CD8-positive, alpha-beta T cell (primary cell): ENCODE measurements at regions of chr5 and their contacts with region 1.

Region 1: DNA sequence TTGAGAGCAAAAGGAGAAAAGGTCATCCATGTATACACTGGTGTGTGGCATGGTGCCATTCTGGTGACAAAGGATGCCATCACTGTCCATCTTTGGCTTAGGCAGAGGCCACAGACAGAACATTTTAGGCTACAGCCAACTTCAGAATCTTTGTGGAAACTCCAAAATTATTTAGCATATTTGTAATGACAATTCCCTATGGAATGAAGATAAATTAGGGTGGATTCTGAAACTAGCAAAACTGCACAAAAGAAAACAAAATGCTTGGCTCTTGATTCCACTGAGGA is 92.5 kb downstream of the FBXW11 start:
- DNase-seq: no peak
- ATAC-seq: no peak
- H3K4me3 ChIP-seq: no peak overlapping the region
- H3K4me3 Mint-ChIP-seq: no peak overlapping the region
- H3K27ac ChIP-seq: no peak overlapping the region
- H3K27ac Mint-ChIP-seq: peak overlapping the region; percentile 7
- H3K4me1 ChIP-seq: peaks cover 9% of the 10 kb centered on the region
- H3K4me1 Mint-ChIP-seq: peaks cover 45% of the 10 kb centered on the region
- H3K27me3 ChIP-seq: no peaks in the 10 kb centered on the region
- H3K27me3 Mint-ChIP-seq: no peaks in the 10 kb centered on the region
- CTCF ChIP-seq: no peak

Region 2: GRCh38 chr5:169934990-169935389 is 1978.9 kb before region 1 on chr5:
- CTCF ChIA-PET with region 1: no interaction called
- POLR2A ChIA-PET with region 1: no interaction called
- intact Hi-C with region 1: no loop called
- DNase-seq: no peak
- ATAC-seq: no peak
- H3K4me3 ChIP-seq: no peak overlapping the region
- H3K4me3 Mint-ChIP-seq: no peak overlapping the region
- H3K27ac ChIP-seq: no peak overlapping the region
- H3K27ac Mint-ChIP-seq: peak overlapping the region; percentile 62
- H3K4me1 ChIP-seq: peaks cover 3% of the 10 kb centered on the region
- H3K4me1 Mint-ChIP-seq: peaks cover 51% of the 10 kb centered on the region
- H3K27me3 ChIP-seq: no peaks in the 10 kb centered on the region
- H3K27me3 Mint-ChIP-seq: no peaks in the 10 kb centered on the region
- CTCF ChIP-seq: no peak

Region 3: GRCh38 chr5:171898386-171898785 is 15.5 kb before region 1 on chr5:
- CTCF ChIA-PET with region 1: interaction called, 17 read pairs
- POLR2A ChIA-PET with region 1: no interaction called
- intact Hi-C with region 1: no loop called
- DNase-seq: no peak
- ATAC-seq: no peak
- H3K4me3 ChIP-seq: no peak overlapping the region
- H3K4me3 Mint-ChIP-seq: no peak overlapping the region
- H3K27ac ChIP-seq: no peak overlapping the region
- H3K27ac Mint-ChIP-seq: no peak overlapping the region
- H3K4me1 ChIP-seq: peaks cover 11% of the 10 kb centered on the region
- H3K4me1 Mint-ChIP-seq: peaks cover 36% of the 10 kb centered on the region
- H3K27me3 ChIP-seq: no peaks in the 10 kb centered on the region
- H3K27me3 Mint-ChIP-seq: no peaks in the 10 kb centered on the region
- CTCF ChIP-seq: no peak

Region 4: DNA sequence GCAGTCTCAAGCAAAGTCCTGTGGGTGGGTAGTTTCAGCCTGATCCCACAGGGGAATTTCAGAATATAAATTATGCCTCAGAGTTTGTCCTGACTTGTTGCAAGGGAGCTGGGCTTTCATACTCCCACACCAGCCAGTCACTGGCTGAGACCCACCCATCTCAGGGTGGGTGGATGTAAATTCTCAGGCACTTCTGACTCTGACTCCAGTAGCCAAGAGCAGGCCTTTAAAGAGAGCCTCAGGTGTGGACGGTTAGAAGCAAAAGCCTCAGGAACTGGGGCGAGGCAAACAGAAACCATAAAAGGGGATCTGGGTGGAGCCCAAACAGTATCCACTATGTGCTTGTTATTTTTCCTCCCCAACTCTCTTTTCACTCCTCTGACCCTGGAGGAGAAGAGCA is 121.1 kb after region 1 on chr5:
- CTCF ChIA-PET with region 1: interaction called, 54 read pairs
- POLR2A ChIA-PET with region 1: no interaction called
- intact Hi-C with region 1: loop called (anchors 1 kb)
- DNase-seq: no peak
- ATAC-seq: no peak
- H3K4me3 ChIP-seq: no peak overlapping the region
- H3K4me3 Mint-ChIP-seq: no peak overlapping the region
- H3K27ac ChIP-seq: no peak overlapping the region
- H3K27ac Mint-ChIP-seq: no peak overlapping the region
- H3K4me1 ChIP-seq: no peaks in the 10 kb centered on the region
- H3K4me1 Mint-ChIP-seq: peaks cover 11% of the 10 kb centered on the region
- H3K27me3 ChIP-seq: no peaks in the 10 kb centered on the region
- H3K27me3 Mint-ChIP-seq: no peaks in the 10 kb centered on the region
- CTCF ChIP-seq: no peak

Region 5: DNA sequence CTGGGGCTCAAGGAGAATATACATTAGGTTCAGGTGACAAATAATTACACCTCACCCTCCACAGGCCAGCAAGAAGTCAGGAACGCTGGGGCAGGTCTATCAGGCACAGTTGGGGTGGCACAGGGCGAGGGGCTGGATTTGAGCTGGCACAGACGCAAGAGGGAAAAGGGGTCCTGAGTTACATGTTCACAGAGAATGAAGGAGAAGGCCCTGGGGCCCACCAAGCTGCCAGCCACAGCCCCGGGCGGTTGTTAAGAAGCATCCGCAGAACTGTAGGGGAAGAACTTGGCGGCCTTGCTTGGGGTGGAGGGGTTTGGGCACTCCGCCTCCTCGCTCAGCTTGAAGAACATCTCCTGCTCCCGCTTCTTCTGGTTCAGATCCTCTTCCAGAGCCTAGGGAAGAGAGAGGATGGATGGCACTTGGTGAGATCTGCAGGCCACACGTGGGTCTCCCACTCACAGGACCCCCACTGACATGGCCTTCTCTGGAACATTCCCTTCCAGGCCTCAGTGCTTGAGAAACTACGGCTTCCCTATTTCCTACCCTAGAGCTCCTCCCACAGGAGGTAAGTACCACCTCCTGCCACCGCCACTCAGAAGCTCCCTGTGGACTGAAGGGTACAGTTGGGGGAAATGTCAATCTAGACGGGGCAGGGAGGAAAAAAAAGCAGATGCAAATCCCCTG is 130.8 kb after region 1 on chr5:
- CTCF ChIA-PET with region 1: interaction called, 54 read pairs
- POLR2A ChIA-PET with region 1: interaction called, 3 read pairs
- intact Hi-C with region 1: loop called (anchors 1 kb)
- DNase-seq: no peak
- ATAC-seq: no peak
- H3K4me3 ChIP-seq: no peak overlapping the region
- H3K4me3 Mint-ChIP-seq: no peak overlapping the region
- H3K27ac ChIP-seq: no peak overlapping the region
- H3K27ac Mint-ChIP-seq: peak overlapping the region; percentile 78
- H3K4me1 ChIP-seq: no peaks in the 10 kb centered on the region
- H3K4me1 Mint-ChIP-seq: peaks cover 11% of the 10 kb centered on the region
- H3K27me3 ChIP-seq: no peaks in the 10 kb centered on the region
- H3K27me3 Mint-ChIP-seq: no peaks in the 10 kb centered on the region
- CTCF ChIP-seq: no peak

Region 6: DNA sequence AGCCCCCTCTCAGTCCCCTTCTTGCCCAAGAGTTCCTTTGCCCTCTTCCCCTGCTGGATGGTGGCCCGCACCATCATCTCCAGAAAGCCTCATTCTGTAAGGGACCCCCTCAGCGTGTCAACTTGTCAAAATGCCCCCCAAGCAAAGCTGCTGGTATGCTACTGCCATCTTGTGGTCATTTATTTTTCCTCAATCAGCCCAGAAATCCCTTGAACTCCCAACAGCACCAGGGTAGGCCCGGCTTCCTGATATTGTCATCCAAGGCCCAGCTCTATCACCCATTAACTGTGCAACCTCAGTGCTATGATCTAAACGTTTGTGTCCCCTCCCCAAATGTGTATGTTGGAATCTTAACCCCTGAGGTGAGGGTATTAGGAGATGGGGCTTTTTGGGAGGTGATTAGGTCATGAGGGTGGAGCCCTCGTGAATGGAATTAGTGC is 145.8 kb after region 1 on chr5:
- CTCF ChIA-PET with region 1: interaction called, 26 read pairs
- POLR2A ChIA-PET with region 1: interaction called, 3 read pairs
- intact Hi-C with region 1: loop called (anchors 2 to 5 kb)
- DNase-seq: peak in 2 of 9 experiments; percentile 39 to 54
- ATAC-seq: no peak
- H3K4me3 ChIP-seq: no peak overlapping the region
- H3K4me3 Mint-ChIP-seq: no peak overlapping the region
- H3K27ac ChIP-seq: no peak overlapping the region
- H3K27ac Mint-ChIP-seq: peak overlapping the region; percentile 61
- H3K4me1 ChIP-seq: peaks cover 9% of the 10 kb centered on the region
- H3K4me1 Mint-ChIP-seq: peaks cover 30% of the 10 kb centered on the region
- H3K27me3 ChIP-seq: no peaks in the 10 kb centered on the region
- H3K27me3 Mint-ChIP-seq: no peaks in the 10 kb centered on the region
- CTCF ChIP-seq: peak; percentile 43

Region 7: DNA sequence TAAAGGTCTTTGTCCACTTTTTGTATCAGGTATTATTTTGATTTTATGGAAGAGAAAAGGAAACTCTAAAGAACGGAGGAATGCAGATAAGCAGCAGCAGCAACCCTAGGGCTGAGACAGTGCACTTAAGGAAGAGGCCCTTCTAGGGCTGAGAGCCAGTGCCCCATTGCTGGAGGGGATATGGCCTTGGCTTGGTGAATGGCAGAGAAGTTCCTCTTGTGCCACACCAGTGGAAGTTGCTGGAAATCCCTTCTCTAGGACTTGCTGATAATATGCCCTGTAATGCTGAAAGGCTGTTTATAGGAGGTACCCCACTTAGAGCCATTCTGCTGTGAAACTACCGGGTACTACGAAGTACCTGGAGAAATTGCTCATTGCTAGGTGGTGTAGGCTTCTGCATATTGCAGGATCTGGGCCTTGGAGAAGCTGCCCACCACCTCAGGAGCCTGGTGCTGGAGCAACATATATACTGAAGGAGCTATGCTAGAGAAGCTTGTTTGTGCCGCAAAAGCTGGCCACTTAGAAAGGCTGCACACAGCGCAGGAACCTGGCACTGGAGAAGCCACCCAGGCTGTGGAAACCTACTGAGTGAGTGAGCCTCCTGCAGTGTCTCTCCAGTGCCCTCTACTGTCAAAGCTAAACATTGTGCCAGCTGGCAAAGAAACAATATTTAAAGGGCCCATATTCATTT is 379.3 kb after region 1 on chr5:
- CTCF ChIA-PET with region 1: interaction called, 28 read pairs
- POLR2A ChIA-PET with region 1: no interaction called
- intact Hi-C with region 1: loop called (anchors 1 to 2 kb)
- DNase-seq: peak; percentile 16 to 78 (median 53)
- ATAC-seq: peak; percentile 100
- H3K4me3 ChIP-seq: no peak overlapping the region
- H3K4me3 Mint-ChIP-seq: no peak overlapping the region
- H3K27ac ChIP-seq: no peak overlapping the region
- H3K27ac Mint-ChIP-seq: no peak overlapping the region
- H3K4me1 ChIP-seq: no peaks in the 10 kb centered on the region
- H3K4me1 Mint-ChIP-seq: peaks cover 2% of the 10 kb centered on the region
- H3K27me3 ChIP-seq: no peaks in the 10 kb centered on the region
- H3K27me3 Mint-ChIP-seq: peaks cover 3% of the 10 kb centered on the region
- CTCF ChIP-seq: peak; percentile 82

Region 8: DNA sequence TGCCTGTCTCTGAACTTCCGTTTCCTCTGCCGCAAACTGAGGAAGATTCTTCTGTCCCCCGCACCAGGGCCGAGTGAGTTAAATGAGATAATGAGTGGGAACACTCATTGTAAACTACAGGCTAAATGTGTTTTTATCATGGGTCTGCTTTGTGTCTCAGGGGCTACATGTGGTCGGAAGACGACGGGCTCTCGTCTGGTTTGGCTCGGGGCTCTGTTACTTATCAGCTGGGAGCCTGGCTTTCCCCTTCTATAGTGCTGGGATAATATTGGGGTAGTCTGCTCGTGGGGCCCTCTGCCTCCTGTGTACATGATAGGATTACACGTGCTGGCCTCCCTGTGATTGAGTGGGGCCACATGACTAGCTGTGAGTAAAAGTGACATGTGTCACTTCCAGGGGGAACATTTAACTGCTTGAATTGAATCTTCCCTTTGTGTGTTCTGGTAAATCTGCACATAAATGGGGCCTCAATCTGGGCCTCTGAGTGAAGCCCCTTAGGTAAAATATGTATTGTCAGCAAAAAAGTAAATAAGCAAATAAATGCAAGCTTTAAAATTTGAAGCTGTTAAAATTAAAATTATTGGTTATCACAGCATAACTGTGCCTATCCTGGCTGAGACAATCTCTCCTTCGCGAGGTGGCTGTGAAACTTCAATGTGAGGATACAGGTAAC is 627.3 kb after region 1 on chr5:
- CTCF ChIA-PET with region 1: no interaction called
- POLR2A ChIA-PET with region 1: no interaction called
- intact Hi-C with region 1: no loop called
- DNase-seq: peak in 1 of 9 experiments; percentile 5
- ATAC-seq: no peak
- H3K4me3 ChIP-seq: no peak overlapping the region
- H3K4me3 Mint-ChIP-seq: no peak overlapping the region
- H3K27ac ChIP-seq: no peak overlapping the region
- H3K27ac Mint-ChIP-seq: no peak overlapping the region
- H3K4me1 ChIP-seq: no peaks in the 10 kb centered on the region
- H3K4me1 Mint-ChIP-seq: no peaks in the 10 kb centered on the region
- H3K27me3 ChIP-seq: no peaks in the 10 kb centered on the region
- H3K27me3 Mint-ChIP-seq: peaks cover 5% of the 10 kb centered on the region
- CTCF ChIP-seq: no peak